Esophagus muscularis mucosa (tissue), 4 donors: ENCODE measurements at regions of chr4 and their contacts with region 1.

Region 1: DNA sequence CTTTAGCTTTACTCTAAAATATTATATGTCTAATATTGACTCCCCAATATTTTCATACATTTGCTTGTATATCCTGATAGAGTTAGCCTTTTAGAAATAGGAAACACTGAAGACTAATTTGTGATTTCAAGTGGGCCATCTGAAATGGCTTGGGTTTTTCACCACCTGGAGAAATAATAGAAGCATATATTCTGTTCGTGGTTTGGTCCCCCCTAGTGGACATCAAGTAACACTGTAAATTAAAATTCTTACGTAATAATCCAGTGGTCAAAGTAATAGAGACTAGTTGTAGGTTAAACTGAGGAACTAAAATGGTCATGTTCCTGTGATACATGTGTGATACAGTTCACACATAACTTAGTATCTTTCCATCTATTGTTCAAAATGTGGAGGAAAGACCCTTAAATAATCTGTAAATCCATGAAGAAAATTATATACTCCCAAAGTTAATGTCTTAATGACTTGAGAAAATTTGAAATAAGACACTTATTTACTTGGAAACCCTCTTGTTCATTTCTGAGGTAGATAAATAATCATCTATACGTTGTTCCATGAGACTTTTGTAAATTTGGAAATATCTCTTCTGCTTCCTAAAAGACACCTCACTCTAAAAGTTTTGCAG is 79.8 kb upstream of the SMARCAD1 start:
- DNase-seq: no peak
- H3K4me3 ChIP-seq: no peak overlapping the region
- H3K27ac ChIP-seq: no peak overlapping the region
- H3K4me1 ChIP-seq: no peaks in the 10 kb centered on the region
- H3K27me3 ChIP-seq: peaks cover 0 to 7% (median 0%) of the 10 kb centered on the region in 4 donors
- CTCF ChIP-seq: peak; percentile 30 to 58 (median 46)
- EP300 ChIP-seq: no peak
- POLR2A ChIP-seq: no peak

Region 2: DNA sequence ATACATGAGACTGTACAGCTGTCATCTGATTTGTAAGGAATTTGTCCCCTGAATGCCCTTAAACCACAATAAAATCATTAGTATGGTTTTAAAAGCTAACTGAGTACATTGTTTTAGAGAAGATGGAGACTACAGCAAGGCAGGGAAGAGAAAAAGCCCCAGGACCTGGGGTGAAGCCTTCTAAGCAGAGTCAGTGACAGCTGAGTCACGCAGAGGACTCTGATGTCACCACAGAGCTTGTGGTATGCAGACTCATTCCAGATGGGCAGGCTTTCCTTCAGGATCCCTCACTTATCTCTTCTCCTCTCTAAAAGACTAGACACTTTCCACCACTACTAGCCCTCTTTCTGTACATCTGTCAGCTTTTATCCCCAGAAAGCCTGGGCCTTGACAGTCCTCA is 396.4 kb before region 1 on chr4:
- intact Hi-C with region 1: no loop called
- DNase-seq: no peak
- H3K4me3 ChIP-seq: no peak overlapping the region
- H3K27ac ChIP-seq: no peak overlapping the region
- H3K4me1 ChIP-seq: no peaks in the 10 kb centered on the region
- H3K27me3 ChIP-seq: no peaks in the 10 kb centered on the region
- CTCF ChIP-seq: no peak
- EP300 ChIP-seq: no peak
- POLR2A ChIP-seq: no peak

Region 3: DNA sequence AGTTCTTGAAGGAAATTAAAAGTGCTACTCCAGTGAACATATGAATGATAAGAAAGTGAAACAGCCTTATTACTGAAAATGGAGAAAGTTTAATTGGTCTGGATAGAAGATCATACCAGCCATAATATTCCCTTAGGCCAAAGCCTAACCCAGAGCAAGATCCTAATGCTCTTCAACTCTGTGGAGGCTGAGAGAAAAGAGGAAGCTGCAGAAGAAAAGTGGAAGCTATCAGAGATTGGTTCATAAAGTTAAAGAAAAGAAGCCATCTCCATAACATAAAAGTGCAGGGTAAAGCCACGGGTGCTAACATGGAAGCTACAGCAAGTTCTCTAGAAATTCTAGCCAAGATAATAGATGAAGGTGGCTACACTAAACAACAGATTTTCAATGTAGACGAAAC is 384.8 kb before region 1 on chr4:
- intact Hi-C with region 1: no loop called
- DNase-seq: no peak
- H3K4me3 ChIP-seq: no peak overlapping the region
- H3K27ac ChIP-seq: no peak overlapping the region
- H3K4me1 ChIP-seq: no peaks in the 10 kb centered on the region
- H3K27me3 ChIP-seq: no peaks in the 10 kb centered on the region
- CTCF ChIP-seq: no peak
- EP300 ChIP-seq: no peak
- POLR2A ChIP-seq: no peak

Region 4: GRCh38 chr4:93791570-93792195 is 336.1 kb before region 1 on chr4:
- intact Hi-C with region 1: loop called (anchors 5 kb)
- DNase-seq: no peak
- H3K4me3 ChIP-seq: no peak overlapping the region
- H3K27ac ChIP-seq: no peak overlapping the region
- H3K4me1 ChIP-seq: no peaks in the 10 kb centered on the region
- H3K27me3 ChIP-seq: peaks cover 0 to 12% (median 0%) of the 10 kb centered on the region in 4 donors
- CTCF ChIP-seq: peak; percentile 66 to 78 (median 67)
- EP300 ChIP-seq: no peak
- POLR2A ChIP-seq: no peak

Region 5: DNA sequence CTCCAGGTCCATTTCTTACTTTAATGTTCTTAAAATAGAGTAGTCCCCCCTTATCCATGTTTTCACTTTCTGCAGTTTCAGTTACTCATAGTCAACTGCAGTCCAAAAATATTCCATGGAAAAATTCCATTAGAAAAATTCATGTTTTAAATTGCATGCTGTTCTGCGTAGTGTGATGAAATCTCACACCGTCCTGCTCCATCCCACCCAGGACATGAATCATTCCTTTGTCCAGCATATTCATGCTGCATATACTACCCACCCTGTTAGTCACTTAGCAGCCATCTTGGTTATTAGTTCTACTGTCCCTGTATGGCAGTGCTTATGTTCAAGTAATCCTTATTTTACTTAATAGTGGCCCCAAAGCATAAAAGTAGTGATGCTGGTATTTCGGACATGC is 318.6 kb after region 1 on chr4:
- intact Hi-C with region 1: no loop called
- DNase-seq: no peak
- H3K4me3 ChIP-seq: no peak overlapping the region
- H3K27ac ChIP-seq: no peak overlapping the region
- H3K4me1 ChIP-seq: peaks cover 5 to 9% (median 7%) of the 10 kb centered on the region in 4 donors
- H3K27me3 ChIP-seq: no peaks in the 10 kb centered on the region
- CTCF ChIP-seq: no peak
- EP300 ChIP-seq: no peak
- POLR2A ChIP-seq: no peak

Region 6: DNA sequence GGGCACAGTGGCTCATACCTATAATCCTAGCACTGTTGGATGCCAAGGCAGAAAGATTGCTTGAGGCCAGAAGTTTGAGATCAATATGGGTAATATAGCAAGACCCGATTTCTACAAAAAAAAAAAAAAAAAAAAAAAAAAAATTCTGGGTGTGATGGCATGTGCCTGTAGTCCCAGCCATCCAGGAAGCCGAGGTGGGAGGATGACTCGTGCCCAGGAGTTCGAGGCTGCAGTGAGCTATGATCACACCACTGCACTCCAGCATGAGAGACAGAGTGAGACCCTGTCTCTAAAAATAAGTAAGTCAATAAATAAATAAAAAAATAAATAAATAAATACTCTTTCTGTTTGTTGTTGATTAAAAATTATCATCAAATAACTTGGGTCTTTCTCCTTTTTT is 567.6 kb after region 1 on chr4:
- intact Hi-C with region 1: no loop called
- DNase-seq: no peak
- H3K4me3 ChIP-seq: no peak overlapping the region
- H3K27ac ChIP-seq: no peak overlapping the region
- H3K4me1 ChIP-seq: no peaks in the 10 kb centered on the region
- H3K27me3 ChIP-seq: no peaks in the 10 kb centered on the region
- CTCF ChIP-seq: no peak
- EP300 ChIP-seq: no peak
- POLR2A ChIP-seq: no peak